ENCODE measurements at regions of chr17 and their contacts with region 1.

Region 1: GRCh38 chr17:74736513-74737298 is at the start of gene RAB37:
- DNase-seq: no peak
- H3K4me3 ChIP-seq: peak within 1 kb of the TSS; percentile 30
- H3K27ac ChIP-seq: no peak within 1 kb of the TSS
- H3K4me1 ChIP-seq: peaks cover 16% of the 10 kb centered on the region
- H3K27me3 ChIP-seq: peaks cover 63% of the 10 kb centered on the region
- CTCF ChIP-seq: peak; percentile 59
- total RNA-seq, gene RAB37: not detected in 2 replicates

Region 2: DNA sequence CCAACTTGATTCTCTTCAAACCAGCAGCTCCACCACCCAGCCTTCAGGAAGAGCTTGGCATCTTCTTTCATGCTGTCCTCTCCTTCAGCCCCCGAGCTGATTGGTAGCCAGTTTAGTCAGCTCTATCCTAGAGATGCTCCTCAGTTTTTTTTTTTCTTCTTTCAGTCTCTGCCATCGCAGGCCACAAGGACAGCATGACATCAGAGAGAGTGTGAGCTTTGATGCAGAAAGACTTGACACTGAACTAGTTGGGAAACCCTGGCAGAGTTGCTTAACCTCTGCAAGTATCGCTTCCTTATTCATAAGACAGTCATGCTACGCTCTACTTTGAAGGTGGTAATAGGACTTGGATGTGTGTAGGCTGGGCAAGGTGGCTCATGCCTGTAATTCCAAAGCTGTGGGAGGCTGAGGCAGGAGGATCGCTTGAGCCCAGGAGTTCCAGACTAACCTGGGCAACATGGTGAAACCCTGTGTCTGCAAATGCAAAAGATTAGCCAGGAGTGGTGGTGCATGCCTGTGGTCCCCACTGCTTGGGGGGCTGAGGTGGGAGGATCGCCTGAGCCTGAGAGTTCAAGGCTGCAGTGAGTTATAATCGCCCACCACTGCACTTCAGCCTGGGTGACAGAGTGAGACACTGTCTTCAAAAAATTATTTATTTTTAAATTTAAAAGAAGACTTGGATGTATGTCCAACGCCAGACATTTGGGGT is 208.1 kb before region 1 on chr17:
- CTCF ChIA-PET with region 1: no interaction called
- POLR2A ChIA-PET with region 1: no interaction called
- intact Hi-C with region 1: no loop called
- DNase-seq: no peak
- H3K4me3 ChIP-seq: no peak overlapping the region
- H3K27ac ChIP-seq: no peak overlapping the region
- H3K4me1 ChIP-seq: no peaks in the 10 kb centered on the region
- H3K27me3 ChIP-seq: peaks cover 24% of the 10 kb centered on the region
- CTCF ChIP-seq: no peak

Region 3: DNA sequence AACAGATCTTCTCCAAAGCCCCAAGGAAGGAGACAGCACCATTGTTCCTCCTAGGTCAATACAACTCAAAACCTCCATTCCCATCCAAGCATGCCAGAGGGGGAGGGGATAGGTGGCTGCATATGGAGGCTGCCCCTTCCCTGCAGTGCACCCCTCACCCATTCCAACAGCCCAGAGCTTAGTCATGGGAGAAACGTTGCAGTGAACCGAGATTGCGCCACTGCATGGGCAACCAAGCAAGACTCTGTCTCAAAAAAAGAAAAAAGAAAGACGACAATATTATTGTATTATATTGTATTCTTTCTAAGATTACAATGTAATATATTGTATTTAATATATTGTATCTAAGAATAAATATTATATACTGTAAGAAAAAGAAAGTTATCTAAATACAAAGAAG is 76.8 kb before region 1 on chr17:
- CTCF ChIA-PET with region 1: interaction called, 19 read pairs
- POLR2A ChIA-PET with region 1: no interaction called
- intact Hi-C with region 1: loop called (anchors 1 kb)
- DNase-seq: no peak
- H3K4me3 ChIP-seq: no peak overlapping the region
- H3K27ac ChIP-seq: no peak overlapping the region
- H3K4me1 ChIP-seq: no peaks in the 10 kb centered on the region
- H3K27me3 ChIP-seq: peaks cover 59% of the 10 kb centered on the region
- CTCF ChIP-seq: no peak

Measured in A673 (cell line).